B cell (primary cell): ENCODE measurements at regions of chr1 and their contacts with region 1.

Region 1: GRCh38 chr1:24642481-24643361 is at the start of gene SRRM1:
- DNase-seq: peak; percentile 100
- ATAC-seq: peak; percentile 90
- H3K4me3 ChIP-seq: peak within 1 kb of the TSS; percentile 81 to 99 (median 97)
- H3K4me3 Mint-ChIP-seq: peak within 1 kb of the TSS; percentile 96
- H3K27ac ChIP-seq: peak within 1 kb of the TSS; percentile 98 to 99
- H3K27ac Mint-ChIP-seq: peak within 1 kb of the TSS; percentile 99
- H3K4me1 ChIP-seq: peaks cover 17 to 25% of the 10 kb centered on the region in 2 donors
- H3K4me1 Mint-ChIP-seq: peaks cover 36% of the 10 kb centered on the region
- H3K27me3 ChIP-seq: no peaks in the 10 kb centered on the region
- H3K27me3 Mint-ChIP-seq: no peaks in the 10 kb centered on the region
- CTCF ChIP-seq: no peak
- total RNA-seq, gene SRRM1: 226 and 238 TPM in 2 replicates

Region 2: DNA sequence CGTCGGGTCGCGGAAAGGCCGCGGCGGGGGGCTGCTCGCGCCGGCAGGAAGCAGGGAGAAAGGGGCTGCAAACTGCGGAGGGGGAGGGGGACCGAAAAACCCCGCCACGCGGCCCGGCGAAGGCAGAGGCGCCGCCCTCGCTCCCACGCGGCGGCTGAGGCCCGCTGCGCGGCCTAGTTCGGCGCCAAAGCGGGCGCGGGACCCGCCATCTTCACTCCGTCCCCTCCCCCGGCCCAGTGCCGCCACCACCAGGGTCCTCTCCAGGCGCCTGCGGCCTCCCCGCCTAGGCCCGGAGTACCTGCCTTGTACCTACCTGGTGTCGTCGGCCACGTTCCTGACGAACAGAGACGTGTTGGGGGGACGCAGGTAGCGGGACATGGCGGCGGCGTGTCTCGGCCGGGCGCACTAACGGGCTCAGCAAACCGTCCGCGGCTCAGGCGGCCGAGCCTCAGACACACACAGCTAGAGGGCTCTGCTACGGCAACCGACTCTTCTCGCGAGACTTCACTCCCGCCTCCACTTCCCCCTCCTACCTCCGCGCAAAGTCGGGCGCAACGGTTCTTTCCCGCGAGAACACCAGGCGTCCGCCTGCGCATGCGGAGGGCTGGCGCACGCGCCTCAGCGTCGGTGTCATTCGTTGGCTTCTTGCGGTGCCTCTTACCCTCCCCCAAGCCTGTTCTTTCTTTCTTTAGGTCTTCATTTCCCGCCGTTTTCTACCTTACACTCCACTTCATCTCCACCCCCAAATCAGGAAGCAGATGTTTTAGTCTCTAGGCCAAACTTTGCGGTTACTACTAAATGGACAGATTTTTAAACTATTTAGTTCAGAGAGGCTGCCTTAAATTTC is 662.6 kb before region 1 on chr1 and contains the start of gene SRSF10:
- CTCF ChIA-PET with region 1: no interaction called
- POLR2A ChIA-PET with region 1: no interaction called
- intact Hi-C with region 1: loop called (anchors 5 kb)
- DNase-seq: peak; percentile 100
- ATAC-seq: peak; percentile 96
- H3K4me3 ChIP-seq: peak within 1 kb of the TSS; percentile 84 to 96 (median 89)
- H3K4me3 Mint-ChIP-seq: peak within 1 kb of the TSS; percentile 91
- H3K27ac ChIP-seq: peak within 1 kb of the TSS; percentile 97
- H3K27ac Mint-ChIP-seq: peak within 1 kb of the TSS; percentile 95
- H3K4me1 ChIP-seq: peaks cover 32 to 41% of the 10 kb centered on the region in 2 donors
- H3K4me1 Mint-ChIP-seq: peaks cover 49% of the 10 kb centered on the region
- H3K27me3 ChIP-seq: no peaks in the 10 kb centered on the region
- H3K27me3 Mint-ChIP-seq: no peaks in the 10 kb centered on the region
- CTCF ChIP-seq: peak; percentile 42
- total RNA-seq, gene SRSF10: 213 and 223 TPM in 2 replicates

Region 3: DNA sequence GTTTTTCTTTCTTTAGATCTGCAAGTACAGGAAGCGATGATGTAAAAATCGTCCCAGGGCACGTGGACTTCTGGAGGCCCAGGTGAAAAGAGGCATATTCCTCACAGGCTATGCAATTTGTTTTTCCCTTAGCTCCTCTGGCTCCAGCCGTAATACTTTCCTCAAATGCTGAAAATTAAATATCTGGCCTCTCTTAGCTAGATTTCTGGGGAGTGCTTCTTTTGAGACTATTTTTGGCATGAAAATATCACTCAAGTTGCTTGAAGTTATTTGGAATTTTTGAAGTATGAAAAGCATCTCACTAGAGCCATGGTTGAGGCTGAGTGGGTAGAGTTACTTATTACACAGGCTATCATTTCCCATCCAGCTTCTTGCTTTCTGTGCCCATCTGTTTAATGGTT is 590.5 kb before region 1 on chr1:
- CTCF ChIA-PET with region 1: no interaction called
- POLR2A ChIA-PET with region 1: no interaction called
- intact Hi-C with region 1: no loop called
- DNase-seq: no peak
- ATAC-seq: no peak
- H3K4me3 ChIP-seq: no peak overlapping the region
- H3K4me3 Mint-ChIP-seq: no peak overlapping the region
- H3K27ac ChIP-seq: no peak overlapping the region
- H3K27ac Mint-ChIP-seq: no peak overlapping the region
- H3K4me1 ChIP-seq: no peaks in the 10 kb centered on the region
- H3K4me1 Mint-ChIP-seq: no peaks in the 10 kb centered on the region
- H3K27me3 ChIP-seq: no peaks in the 10 kb centered on the region
- H3K27me3 Mint-ChIP-seq: no peaks in the 10 kb centered on the region
- CTCF ChIP-seq: no peak

Region 4: GRCh38 chr1:24415334-24415909 is 227.3 kb before region 1 on chr1 and contains the start of gene NIPAL3:
- CTCF ChIA-PET with region 1: interaction called, 17 read pairs
- POLR2A ChIA-PET with region 1: no interaction called
- intact Hi-C with region 1: loop called (anchors 1 kb)
- DNase-seq: peak; percentile 98
- ATAC-seq: peak; percentile 91
- H3K4me3 ChIP-seq: peak within 1 kb of the TSS; percentile 79 to 94 (median 86)
- H3K4me3 Mint-ChIP-seq: peak within 1 kb of the TSS; percentile 92
- H3K27ac ChIP-seq: peak within 1 kb of the TSS; percentile 37 to 55
- H3K27ac Mint-ChIP-seq: peak within 1 kb of the TSS; percentile 84
- H3K4me1 ChIP-seq: peaks cover 26 to 36% of the 10 kb centered on the region in 2 donors
- H3K4me1 Mint-ChIP-seq: peaks cover 49% of the 10 kb centered on the region
- H3K27me3 ChIP-seq: no peaks in the 10 kb centered on the region
- H3K27me3 Mint-ChIP-seq: no peaks in the 10 kb centered on the region
- CTCF ChIP-seq: peak; percentile 89
- total RNA-seq, gene NIPAL3: 31.6 and 38.8 TPM in 2 replicates

Region 5: DNA sequence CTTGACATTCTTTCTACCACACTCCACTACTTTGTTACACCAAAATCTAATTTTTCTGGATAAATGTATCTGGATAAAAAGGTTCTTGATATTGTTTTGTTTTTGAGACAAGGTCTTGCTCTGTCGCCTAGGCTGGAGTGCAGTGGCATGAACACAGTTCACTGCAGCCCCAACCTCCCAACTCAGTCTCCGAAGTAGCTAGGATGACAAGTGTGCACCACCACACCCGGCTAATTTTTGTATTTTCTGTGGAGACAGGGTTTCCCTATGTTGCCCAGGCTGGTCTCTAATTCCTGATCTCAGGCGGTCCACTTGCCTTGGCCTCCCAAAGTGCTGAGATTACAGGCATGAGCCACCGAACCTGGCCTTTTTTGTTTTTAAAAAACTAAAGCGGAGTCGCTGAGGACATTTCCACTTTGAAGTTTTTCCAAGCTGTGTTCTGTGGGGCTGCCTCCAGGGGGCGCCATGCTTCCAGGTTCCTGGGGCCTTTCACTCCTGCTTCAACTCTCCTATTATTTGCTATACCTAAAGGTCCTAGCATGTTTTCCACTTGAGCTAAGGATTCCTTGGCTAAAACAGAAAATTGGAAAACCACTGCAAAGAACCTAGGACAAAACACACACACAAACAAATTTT is 100.9 kb before region 1 on chr1:
- CTCF ChIA-PET with region 1: no interaction called
- POLR2A ChIA-PET with region 1: interaction called, 4 read pairs
- intact Hi-C with region 1: loop called (anchors 2 kb)
- DNase-seq: no peak
- ATAC-seq: no peak
- H3K4me3 ChIP-seq: no peak overlapping the region
- H3K4me3 Mint-ChIP-seq: no peak overlapping the region
- H3K27ac ChIP-seq: no peak overlapping the region
- H3K27ac Mint-ChIP-seq: peak overlapping the region; percentile 56
- H3K4me1 ChIP-seq: peaks cover 32 to 35% of the 10 kb centered on the region in 2 donors
- H3K4me1 Mint-ChIP-seq: peaks cover 42% of the 10 kb centered on the region
- H3K27me3 ChIP-seq: no peaks in the 10 kb centered on the region
- H3K27me3 Mint-ChIP-seq: no peaks in the 10 kb centered on the region
- CTCF ChIP-seq: peak; percentile 26

Region 6: GRCh38 chr1:24619376-24619775 is 23.3 kb before region 1 on chr1:
- CTCF ChIA-PET with region 1: no interaction called
- POLR2A ChIA-PET with region 1: no interaction called
- intact Hi-C with region 1: no loop called
- DNase-seq: no peak
- ATAC-seq: no peak
- H3K4me3 ChIP-seq: no peak overlapping the region
- H3K4me3 Mint-ChIP-seq: no peak overlapping the region
- H3K27ac ChIP-seq: no peak overlapping the region
- H3K27ac Mint-ChIP-seq: no peak overlapping the region
- H3K4me1 ChIP-seq: no peaks in the 10 kb centered on the region
- H3K4me1 Mint-ChIP-seq: no peaks in the 10 kb centered on the region
- H3K27me3 ChIP-seq: peaks cover 0 to 5% (median 2%) of the 10 kb centered on the region in 4 experiments
- H3K27me3 Mint-ChIP-seq: peaks cover 35% of the 10 kb centered on the region
- CTCF ChIP-seq: no peak

Region 7: DNA sequence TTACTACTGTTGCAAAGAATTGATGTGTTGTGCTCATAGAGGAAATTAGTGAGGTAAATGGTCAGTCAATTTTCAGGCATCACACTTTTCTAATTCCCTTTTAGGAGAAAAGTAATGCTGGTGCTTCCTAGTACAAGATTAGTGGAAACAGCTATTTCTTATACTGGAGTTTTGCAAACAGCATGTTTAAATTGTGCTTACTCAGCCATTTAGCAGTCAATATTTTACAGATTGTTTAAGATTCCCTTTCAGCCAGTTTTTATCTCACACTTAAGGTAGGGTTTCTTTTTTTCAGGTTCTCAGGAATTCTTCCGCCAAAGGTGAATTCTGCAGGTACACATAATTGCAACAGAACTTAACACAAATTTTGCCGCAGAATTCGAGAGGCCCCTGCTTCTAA is 11.3 kb after region 1 on chr1:
- CTCF ChIA-PET with region 1: no interaction called
- POLR2A ChIA-PET with region 1: no interaction called
- intact Hi-C with region 1: no loop called
- DNase-seq: no peak
- ATAC-seq: no peak
- H3K4me3 ChIP-seq: no peak overlapping the region
- H3K4me3 Mint-ChIP-seq: no peak overlapping the region
- H3K27ac ChIP-seq: no peak overlapping the region
- H3K27ac Mint-ChIP-seq: no peak overlapping the region
- H3K4me1 ChIP-seq: no peaks in the 10 kb centered on the region
- H3K4me1 Mint-ChIP-seq: peaks cover 5% of the 10 kb centered on the region
- H3K27me3 ChIP-seq: no peaks in the 10 kb centered on the region
- H3K27me3 Mint-ChIP-seq: no peaks in the 10 kb centered on the region
- CTCF ChIP-seq: no peak

Region 8: DNA sequence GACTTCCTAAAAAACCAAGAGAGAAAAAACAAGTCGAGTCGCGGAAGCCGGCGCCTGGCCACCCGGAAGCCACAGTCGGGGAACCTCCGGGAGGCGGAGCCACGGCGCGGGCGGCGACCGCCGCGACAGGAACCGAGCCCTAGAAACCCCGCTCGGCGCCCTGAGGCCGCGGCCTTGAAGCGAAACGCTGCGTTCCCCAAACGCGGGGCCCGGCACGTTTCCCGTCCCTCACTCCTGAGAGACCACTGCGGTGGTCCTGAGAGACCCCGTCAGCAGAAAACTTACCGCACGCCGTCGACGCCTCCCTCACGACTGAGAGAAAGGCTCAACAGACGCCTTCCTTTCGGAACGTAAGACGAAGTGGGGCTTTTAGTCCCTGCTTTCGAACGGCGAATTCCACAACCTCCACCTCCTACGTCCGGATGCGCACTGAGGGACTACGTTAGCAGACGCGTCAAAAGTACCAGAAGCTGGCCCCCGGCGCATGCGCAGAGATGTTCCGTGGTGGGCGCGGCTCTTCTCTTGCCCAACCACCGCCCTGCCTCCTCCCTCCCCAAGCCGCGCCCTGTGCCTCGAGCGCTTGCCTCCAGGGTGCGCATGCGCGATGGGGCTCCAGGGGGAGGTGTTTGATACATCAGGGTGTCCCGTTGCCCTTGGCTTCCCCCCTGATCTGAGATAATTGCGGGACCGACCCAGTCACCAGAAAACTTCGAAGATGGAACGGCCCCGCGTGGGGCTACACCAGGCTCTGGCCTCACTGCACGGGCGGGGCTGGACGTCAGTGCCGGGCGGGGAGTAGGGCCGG is 604.5 kb after region 1 on chr1 and contains the start of gene RSRP1:
- CTCF ChIA-PET with region 1: no interaction called
- POLR2A ChIA-PET with region 1: no interaction called
- intact Hi-C with region 1: loop called (anchors 1 kb)
- DNase-seq: peak; percentile 99
- ATAC-seq: peak; percentile 86
- H3K4me3 ChIP-seq: peak within 1 kb of the TSS; percentile 91 to 99 (median 96)
- H3K4me3 Mint-ChIP-seq: peak within 1 kb of the TSS; percentile 99
- H3K27ac ChIP-seq: peak within 1 kb of the TSS; percentile 97 to 99
- H3K27ac Mint-ChIP-seq: peak within 1 kb of the TSS; percentile 100
- H3K4me1 ChIP-seq: peaks cover 25 to 26% of the 10 kb centered on the region in 2 donors
- H3K4me1 Mint-ChIP-seq: peaks cover 44% of the 10 kb centered on the region
- H3K27me3 ChIP-seq: no peaks in the 10 kb centered on the region
- H3K27me3 Mint-ChIP-seq: no peaks in the 10 kb centered on the region
- CTCF ChIP-seq: no peak
- total RNA-seq, gene RSRP1: 474 and 482 TPM in 2 replicates

Region 9: GRCh38 chr1:25430666-25431505 is 788.2 kb after region 1 on chr1 and contains the start of gene MACO1:
- CTCF ChIA-PET with region 1: no interaction called
- POLR2A ChIA-PET with region 1: no interaction called
- intact Hi-C with region 1: loop called (anchors 2 kb)
- DNase-seq: peak; percentile 97
- ATAC-seq: peak; percentile 83
- H3K4me3 ChIP-seq: peak within 1 kb of the TSS; percentile 75 to 100 (median 98)
- H3K4me3 Mint-ChIP-seq: peak within 1 kb of the TSS; percentile 99
- H3K27ac ChIP-seq: peak within 1 kb of the TSS; percentile 93 to 99
- H3K27ac Mint-ChIP-seq: peak within 1 kb of the TSS; percentile 99
- H3K4me1 ChIP-seq: peaks cover 18 to 34% of the 10 kb centered on the region in 2 donors
- H3K4me1 Mint-ChIP-seq: peaks cover 43% of the 10 kb centered on the region
- H3K27me3 ChIP-seq: no peaks in the 10 kb centered on the region
- H3K27me3 Mint-ChIP-seq: no peaks in the 10 kb centered on the region
- CTCF ChIP-seq: no peak
- total RNA-seq, gene MACO1: 20.7 and 21.2 TPM in 2 replicates